IMR-90 (cell line): ENCODE measurements at regions of chr16 and their contacts with region 1.

Region 1: DNA sequence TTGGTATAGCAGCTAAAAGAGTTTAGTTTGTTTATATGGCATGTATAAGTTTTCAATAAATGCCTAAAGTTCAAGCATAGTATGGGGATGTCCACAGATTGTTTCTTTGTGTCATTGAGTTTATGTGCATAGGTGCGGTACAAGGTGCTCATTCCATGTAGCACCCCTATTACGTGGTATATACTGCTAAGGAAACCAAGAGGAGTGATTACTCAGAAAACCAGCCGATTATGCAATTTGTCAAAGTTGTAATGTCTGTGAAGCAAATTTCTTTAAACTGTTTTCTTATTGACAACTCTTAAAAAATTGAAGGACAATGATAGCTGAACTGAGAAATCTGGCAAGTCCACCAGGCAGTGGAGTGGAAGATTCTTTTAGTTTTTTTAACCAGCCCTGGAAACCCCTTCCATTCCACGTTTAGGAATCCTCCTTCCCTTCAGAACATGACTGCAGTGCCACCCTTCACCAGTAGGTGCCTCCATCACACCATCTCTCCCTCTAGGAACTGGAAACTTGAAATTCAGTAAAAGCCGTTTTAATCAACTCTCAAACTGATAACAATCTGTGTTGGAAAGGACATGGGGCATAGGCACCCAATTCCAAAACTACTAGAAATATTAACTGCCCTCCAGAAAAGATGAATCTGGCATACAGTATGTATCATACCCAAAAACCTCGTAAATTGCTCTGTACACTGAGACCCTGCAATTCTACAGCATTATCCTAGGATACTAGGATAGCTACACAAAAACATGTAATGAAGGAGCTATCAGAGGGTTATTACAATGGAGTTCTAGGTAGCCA is 43.5 kb downstream of the REXO5 start:
- DNase-seq: peak; percentile 68
- ATAC-seq: peak; percentile 73
- H3K4me3 ChIP-seq: no peak overlapping the region
- H3K27ac ChIP-seq: no peak overlapping the region
- H3K4me1 ChIP-seq: peaks cover 13% of the 10 kb centered on the region
- H3K27me3 ChIP-seq: no peaks in the 10 kb centered on the region
- CTCF ChIP-seq: peak; percentile 98
- POLR2A ChIP-seq: peak; percentile 56; the same call in 1 of the 2 replicates
- RAD21 ChIP-seq: peak; percentile 98

Region 2: DNA sequence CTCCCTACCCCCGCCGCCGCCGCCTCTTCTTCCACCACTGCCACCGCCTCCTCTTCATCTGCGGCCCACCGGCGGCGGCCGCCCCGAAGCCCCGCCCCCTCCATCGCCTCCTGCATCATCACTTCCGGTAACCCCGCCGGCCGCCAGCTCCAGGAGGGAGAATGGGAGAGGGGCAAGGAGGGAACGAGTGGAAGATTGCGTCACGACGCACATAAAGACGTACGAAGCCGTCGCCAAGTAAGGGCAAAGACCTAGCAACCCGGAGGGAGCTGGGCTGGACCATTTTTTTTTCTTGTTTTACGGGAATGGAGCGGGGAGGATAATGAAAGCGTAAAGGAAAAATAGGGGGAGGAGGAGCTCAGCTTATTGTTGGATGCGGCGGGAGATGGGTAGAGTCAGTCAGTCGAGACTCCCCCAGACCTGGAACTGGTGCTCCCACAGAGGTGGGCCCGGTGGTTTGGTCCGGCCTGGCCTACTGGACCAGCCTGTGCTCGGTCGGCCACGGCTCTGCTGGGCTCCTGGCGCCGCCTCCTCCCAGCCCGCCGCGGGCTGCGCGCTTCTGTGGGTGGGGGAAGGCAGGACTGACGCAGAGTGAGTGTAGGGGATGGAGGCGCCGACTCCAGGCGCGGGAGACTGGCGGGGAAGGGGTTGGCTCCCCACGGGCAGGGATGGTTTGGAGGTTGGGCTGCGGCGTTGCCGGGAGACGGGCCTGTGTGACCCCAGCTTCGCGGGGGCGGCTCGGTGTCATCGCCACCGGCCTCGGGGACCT is 50.7 kb after region 1 on chr16 and contains the starts of genes DCUN1D3 and LYRM1:
- CTCF ChIA-PET with region 1: interaction called, 6 read pairs
- POLR2A ChIA-PET with region 1: interaction called, 9 read pairs
- dilution Hi-C with region 1: no loop called
- in situ Hi-C with region 1: no loop called
- intact Hi-C with region 1: loop called (anchors 1 kb)
- DNase-seq: peak; percentile 100
- ATAC-seq: peak; percentile 87
- H3K4me3 ChIP-seq: peak within 1 kb of the TSS; percentile 100
- H3K27ac ChIP-seq: peak within 1 kb of the TSS; percentile 100
- H3K4me1 ChIP-seq: peaks cover 10% of the 10 kb centered on the region
- H3K27me3 ChIP-seq: no peaks in the 10 kb centered on the region
- CTCF ChIP-seq: no peak
- POLR2A ChIP-seq: peak; percentile 96
- RAD21 ChIP-seq: no peak
- total RNA-seq, gene DCUN1D3: 42.3 and 51.7 TPM in 2 replicates
- total RNA-seq, gene LYRM1: 35.0 and 43.6 TPM in 2 replicates

Region 3: DNA sequence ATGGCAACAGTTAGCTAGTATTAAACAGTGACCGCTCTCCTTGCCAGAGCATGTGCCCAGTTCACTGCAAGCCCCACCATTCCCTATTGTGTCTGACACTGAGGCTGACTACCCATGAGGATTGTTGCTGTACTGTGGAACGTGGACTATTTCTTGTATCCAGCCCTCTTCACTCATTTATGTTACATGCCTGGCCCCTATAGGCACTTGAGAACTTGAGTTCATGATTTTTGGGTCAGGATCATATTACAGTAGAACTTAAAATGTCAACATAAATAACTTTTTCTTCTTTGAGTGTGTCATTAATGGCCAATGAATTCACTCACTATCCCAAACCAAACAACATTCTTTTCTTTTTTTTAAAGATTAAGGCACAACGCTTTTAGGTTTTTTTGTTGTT is 106.5 kb after region 1 on chr16:
- CTCF ChIA-PET with region 1: interaction called, 3 read pairs
- POLR2A ChIA-PET with region 1: no interaction called
- dilution Hi-C with region 1: no loop called
- in situ Hi-C with region 1: no loop called
- intact Hi-C with region 1: loop called (anchors 1 kb)
- DNase-seq: peak; percentile 45
- ATAC-seq: peak; percentile 68
- H3K4me3 ChIP-seq: no peak overlapping the region
- H3K27ac ChIP-seq: no peak overlapping the region
- H3K4me1 ChIP-seq: peaks cover 2% of the 10 kb centered on the region; the same call in 1 of the 2 replicates
- H3K27me3 ChIP-seq: no peaks in the 10 kb centered on the region
- CTCF ChIP-seq: no peak; the same call in 1 of the 2 replicates
- POLR2A ChIP-seq: no peak
- RAD21 ChIP-seq: peak; percentile 32; the same call in 1 of the 2 replicates

Region 4: GRCh38 chr16:21083729-21084268 is 234.0 kb after region 1 on chr16:
- CTCF ChIA-PET with region 1: interaction called, 7 read pairs
- POLR2A ChIA-PET with region 1: interaction called, 3 read pairs
- dilution Hi-C with region 1: no loop called
- in situ Hi-C with region 1: loop called (anchors 5 kb)
- intact Hi-C with region 1: loop called (anchors 1 kb)
- DNase-seq: peak; percentile 54
- ATAC-seq: peak; percentile 93
- H3K4me3 ChIP-seq: no peak overlapping the region
- H3K27ac ChIP-seq: no peak overlapping the region
- H3K4me1 ChIP-seq: no peaks in the 10 kb centered on the region
- H3K27me3 ChIP-seq: no peaks in the 10 kb centered on the region
- CTCF ChIP-seq: peak; percentile 80
- POLR2A ChIP-seq: no peak
- RAD21 ChIP-seq: peak; percentile 81

Region 5: GRCh38 chr16:21101631-21102420 is 252.0 kb after region 1 on chr16:
- CTCF ChIA-PET with region 1: interaction called, 6 read pairs
- POLR2A ChIA-PET with region 1: no interaction called
- dilution Hi-C with region 1: no loop called
- in situ Hi-C with region 1: no loop called
- intact Hi-C with region 1: loop called (anchors 1 kb)
- DNase-seq: peak; percentile 20
- ATAC-seq: peak; percentile 59
- H3K4me3 ChIP-seq: no peak overlapping the region
- H3K27ac ChIP-seq: no peak overlapping the region
- H3K4me1 ChIP-seq: peaks cover 5% of the 10 kb centered on the region; the same call in 1 of the 2 replicates
- H3K27me3 ChIP-seq: no peaks in the 10 kb centered on the region
- CTCF ChIP-seq: peak; percentile 45
- POLR2A ChIP-seq: no peak
- RAD21 ChIP-seq: peak; percentile 43

Region 6: DNA sequence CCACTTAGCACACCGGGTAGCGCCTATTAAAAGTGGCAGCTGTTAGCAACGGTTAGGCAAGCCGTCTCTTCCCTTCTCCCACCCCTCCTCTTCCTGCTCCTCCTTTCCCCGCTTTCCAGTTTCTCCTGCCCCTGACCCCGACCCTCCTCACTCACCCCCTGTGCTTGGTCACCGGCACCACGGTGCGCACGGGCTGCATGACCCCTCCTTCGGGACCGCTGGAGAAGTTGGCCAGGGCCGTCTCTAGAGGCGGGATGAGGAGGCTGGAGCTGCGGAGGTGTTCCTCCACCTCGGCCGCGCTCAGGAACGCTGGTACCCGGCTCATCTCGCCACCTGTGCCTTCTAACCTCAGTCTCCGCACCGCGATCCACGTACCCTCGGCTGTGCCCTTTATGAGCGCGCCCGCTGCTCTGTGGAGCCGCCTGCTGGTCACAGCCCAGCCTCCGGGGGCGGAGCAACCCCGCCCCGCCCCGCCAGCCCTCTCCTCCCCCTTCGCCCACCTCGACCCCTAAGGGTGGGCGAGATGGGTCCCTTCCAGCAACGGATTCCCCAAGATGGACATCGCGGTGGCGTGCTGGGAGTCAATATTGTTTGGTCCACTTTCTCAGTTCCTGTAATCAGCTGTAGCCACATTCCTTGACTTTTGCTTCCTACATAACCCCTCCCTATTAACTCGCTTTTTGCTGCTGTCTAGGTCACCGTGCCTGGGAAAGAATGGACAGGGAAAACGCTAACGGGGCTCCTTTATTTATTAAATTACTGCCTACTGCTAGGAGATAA is 428.3 kb after region 1 on chr16 and contains the start of gene CRYM:
- CTCF ChIA-PET with region 1: no interaction called
- POLR2A ChIA-PET with region 1: no interaction called
- dilution Hi-C with region 1: no loop called
- in situ Hi-C with region 1: no loop called
- intact Hi-C with region 1: loop called (anchors 1 kb)
- DNase-seq: no peak
- ATAC-seq: peak; percentile 97
- H3K4me3 ChIP-seq: peak within 1 kb of the TSS; percentile 35
- H3K27ac ChIP-seq: no peak within 1 kb of the TSS
- H3K4me1 ChIP-seq: no peaks in the 10 kb centered on the region
- H3K27me3 ChIP-seq: peaks cover 71% of the 10 kb centered on the region
- CTCF ChIP-seq: peak; percentile 61
- POLR2A ChIP-seq: no peak
- RAD21 ChIP-seq: peak; percentile 55
- total RNA-seq, gene CRYM: not detected in 2 replicates